ENCODE measurements at regions of chr1 and their contacts with region 1.

Region 1: DNA sequence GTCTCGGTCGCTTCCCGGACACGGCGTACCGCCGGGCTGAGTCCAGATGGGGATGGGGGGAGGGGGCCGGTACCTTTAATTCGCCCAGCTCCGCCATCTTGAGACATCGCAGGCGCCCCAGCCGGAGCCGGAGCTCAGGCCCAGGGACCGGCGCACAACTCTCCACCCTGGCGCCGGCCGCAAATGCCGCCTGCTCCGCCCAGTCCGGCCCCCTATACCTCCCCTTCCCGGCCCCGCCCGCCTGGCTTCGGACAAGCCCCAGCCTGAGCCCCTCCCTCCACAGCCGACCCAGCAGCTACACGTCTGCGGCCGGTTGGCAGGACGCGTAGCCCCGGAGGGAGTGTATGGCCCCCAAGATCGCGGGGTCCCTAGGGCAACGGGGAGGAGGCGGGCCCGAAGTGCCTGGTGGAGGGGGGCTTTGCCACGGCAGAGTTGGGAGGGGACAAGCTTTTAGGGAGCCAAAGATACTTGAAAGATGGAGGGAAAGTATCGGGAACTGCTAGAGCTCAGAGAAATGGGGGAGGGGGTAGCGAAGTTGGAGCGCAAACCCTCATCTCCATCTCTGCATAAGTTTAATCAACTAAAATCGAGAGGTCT is at the start of gene PIAS3:
- DNase-seq: peak; percentile 60 to 90 (median 78)
- ATAC-seq: peak; percentile 83
- H3K4me3 ChIP-seq: peak within 1 kb of the TSS; percentile 99 to 100
- H3K4me3 Mint-ChIP-seq: peak within 1 kb of the TSS; percentile 97
- H3K27ac ChIP-seq: peak within 1 kb of the TSS; percentile 64 to 65
- H3K27ac Mint-ChIP-seq: peak within 1 kb of the TSS; percentile 87
- H3K4me1 ChIP-seq: peaks cover 10% of the 10 kb centered on the region
- H3K4me1 Mint-ChIP-seq: peaks cover 17% of the 10 kb centered on the region
- H3K27me3 ChIP-seq: no peaks in the 10 kb centered on the region
- H3K27me3 Mint-ChIP-seq: no peaks in the 10 kb centered on the region
- CTCF ChIP-seq: no peak
- total RNA-seq, gene PIAS3: 16.3 to 16.6 TPM

Region 2: DNA sequence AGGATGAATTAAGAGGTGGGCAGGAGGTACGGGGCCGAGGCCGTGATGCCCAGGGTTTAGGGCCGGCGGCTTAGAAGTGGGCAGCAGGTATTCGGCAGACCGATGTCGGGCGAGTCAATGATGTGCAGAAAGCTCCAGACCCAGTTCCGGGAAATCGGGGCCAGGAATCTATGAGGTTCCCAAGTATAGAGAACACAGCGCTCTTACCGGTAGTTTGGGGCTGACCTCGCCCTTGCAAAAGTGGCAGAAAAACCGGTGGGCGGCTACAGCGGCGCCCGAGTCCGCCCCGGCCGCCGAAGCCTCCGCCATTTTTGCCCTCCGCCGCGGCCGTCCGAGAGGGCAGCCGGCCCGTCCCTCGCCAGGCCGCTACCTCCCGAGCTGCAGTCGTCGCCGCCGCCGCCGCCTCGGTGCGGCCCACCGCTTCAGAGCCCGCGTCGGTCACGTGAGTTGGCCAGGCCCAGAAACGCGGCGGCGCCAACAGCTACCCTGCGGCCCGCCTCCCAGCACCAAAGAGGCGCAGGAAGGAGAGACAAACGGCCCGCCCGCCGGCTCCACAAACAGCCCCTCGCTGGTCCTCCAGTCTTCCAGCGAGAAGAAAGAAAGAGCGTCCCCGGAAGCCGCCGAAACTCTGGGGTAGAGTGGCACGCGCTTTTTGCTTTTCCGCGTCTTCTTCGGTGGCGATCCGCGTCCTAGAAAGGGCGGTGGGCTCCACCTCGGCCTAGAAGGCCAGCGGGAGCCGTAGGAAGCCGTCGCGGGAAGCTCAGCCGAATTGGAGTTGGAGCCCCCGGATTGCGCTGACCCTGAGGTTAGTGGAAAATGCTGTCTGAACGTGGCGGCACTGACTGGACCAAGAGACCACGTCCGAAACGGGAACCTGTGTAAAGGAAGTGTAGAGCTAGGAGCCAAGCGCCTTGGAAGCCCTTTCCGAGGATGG is 35.2 kb before region 1 on chr1 and contains the starts of genes POLR3C and RNF115:
- CTCF ChIA-PET with region 1: interaction called, 3 read pairs
- POLR2A ChIA-PET with region 1: interaction called, 17 read pairs
- intact Hi-C with region 1: loop called in 1 of 2 experiments (anchors 1 kb)
- DNase-seq: peak; percentile 68 to 94 (median 88)
- ATAC-seq: peak; percentile 93
- H3K4me3 ChIP-seq: peak within 1 kb of the TSS; percentile 93 to 99
- H3K4me3 Mint-ChIP-seq: peak within 1 kb of the TSS; percentile 95
- H3K27ac ChIP-seq: peak within 1 kb of the TSS; percentile 77 to 89
- H3K27ac Mint-ChIP-seq: peak within 1 kb of the TSS; percentile 96
- H3K4me1 ChIP-seq: peaks cover 14% of the 10 kb centered on the region
- H3K4me1 Mint-ChIP-seq: peaks cover 35% of the 10 kb centered on the region
- H3K27me3 ChIP-seq: no peaks in the 10 kb centered on the region
- H3K27me3 Mint-ChIP-seq: no peaks in the 10 kb centered on the region
- CTCF ChIP-seq: no peak
- total RNA-seq, gene POLR3C: 22.1 to 25.8 TPM
- total RNA-seq, gene RNF115: 16.4 TPM

Region 3: GRCh38 chr1:145885738-145886287 is 26.8 kb after region 1 on chr1 and contains the start of gene ANKRD35:
- CTCF ChIA-PET with region 1: interaction called, 4 read pairs
- POLR2A ChIA-PET with region 1: interaction called, 21 read pairs
- intact Hi-C with region 1: loop called (anchors 1 kb)
- DNase-seq: peak; percentile 74 to 92 (median 88)
- ATAC-seq: peak; percentile 98
- H3K4me3 ChIP-seq: peak within 1 kb of the TSS; percentile 68 to 84
- H3K4me3 Mint-ChIP-seq: peak within 1 kb of the TSS; percentile 81
- H3K27ac ChIP-seq: no peak within 1 kb of the TSS
- H3K27ac Mint-ChIP-seq: no peak within 1 kb of the TSS
- H3K4me1 ChIP-seq: peaks cover 8% of the 10 kb centered on the region
- H3K4me1 Mint-ChIP-seq: peaks cover 17% of the 10 kb centered on the region
- H3K27me3 ChIP-seq: peaks cover 0 to 8% of the 10 kb centered on the region in 2 experiments
- H3K27me3 Mint-ChIP-seq: peaks cover 17% of the 10 kb centered on the region
- CTCF ChIP-seq: no peak
- total RNA-seq, gene ANKRD35: not detected

Region 4: DNA sequence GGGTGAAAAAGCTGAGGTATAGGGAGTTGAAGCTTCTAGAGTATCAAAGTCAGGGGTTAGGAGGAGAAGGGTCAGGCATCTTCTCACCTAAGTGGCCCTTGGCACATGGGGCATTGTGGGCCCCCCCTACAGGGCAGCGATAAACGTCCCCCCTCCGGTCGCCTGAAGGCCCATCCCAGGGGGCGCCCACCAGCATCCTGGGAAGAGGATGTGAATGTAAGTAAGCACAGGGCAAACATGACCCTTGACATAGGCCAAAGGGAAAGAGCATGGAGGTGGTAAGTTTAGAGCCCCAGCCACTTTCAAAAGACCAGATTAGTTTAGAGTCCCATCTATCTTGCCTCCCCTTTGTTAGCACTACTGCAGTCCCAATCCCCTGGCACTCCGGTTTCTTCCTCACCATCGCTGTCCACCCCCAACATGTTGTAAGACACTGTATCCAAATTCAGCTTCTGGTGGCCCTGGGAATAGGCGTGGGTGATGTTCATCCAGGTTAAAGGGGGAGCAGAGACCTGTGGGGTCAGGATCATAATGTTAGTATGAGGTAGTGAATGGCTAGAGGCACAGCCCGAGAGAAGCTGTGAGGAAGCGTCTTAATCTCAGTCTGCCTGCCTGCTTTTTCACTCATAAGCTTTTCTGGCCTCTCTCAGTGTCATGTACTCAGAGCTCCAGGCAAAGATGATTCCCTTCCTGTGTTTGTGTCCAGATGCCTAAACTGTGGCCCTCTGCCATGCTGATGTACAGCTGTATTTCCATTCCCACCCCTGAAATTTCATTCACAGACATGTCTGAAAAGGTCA is 48.2 kb after region 1 on chr1:
- CTCF ChIA-PET with region 1: interaction called, 29 read pairs
- POLR2A ChIA-PET with region 1: no interaction called
- intact Hi-C with region 1: loop called in 1 of 2 experiments (anchors 2 kb)
- DNase-seq: no peak
- ATAC-seq: no peak
- H3K4me3 ChIP-seq: no peak overlapping the region
- H3K4me3 Mint-ChIP-seq: no peak overlapping the region
- H3K27ac ChIP-seq: no peak overlapping the region
- H3K27ac Mint-ChIP-seq: peak overlapping the region; percentile 23
- H3K4me1 ChIP-seq: no peaks in the 10 kb centered on the region
- H3K4me1 Mint-ChIP-seq: peaks cover 5% of the 10 kb centered on the region
- H3K27me3 ChIP-seq: no peaks in the 10 kb centered on the region
- H3K27me3 Mint-ChIP-seq: no peaks in the 10 kb centered on the region
- CTCF ChIP-seq: no peak

Region 5: GRCh38 chr1:145927063-145927886 is 68.3 kb after region 1 on chr1 and contains the start of gene RBM8A:
- CTCF ChIA-PET with region 1: interaction called, 3 read pairs
- POLR2A ChIA-PET with region 1: interaction called, 41 read pairs
- intact Hi-C with region 1: loop called (anchors 2 kb)
- DNase-seq: peak; percentile 85 to 99 (median 94)
- ATAC-seq: peak; percentile 96
- H3K4me3 ChIP-seq: peak within 1 kb of the TSS; percentile 86 to 91
- H3K4me3 Mint-ChIP-seq: no peak within 1 kb of the TSS
- H3K27ac ChIP-seq: peak within 1 kb of the TSS; percentile 89 to 95
- H3K27ac Mint-ChIP-seq: peak within 1 kb of the TSS; percentile 91
- H3K4me1 ChIP-seq: peaks cover 22% of the 10 kb centered on the region
- H3K4me1 Mint-ChIP-seq: peaks cover 20% of the 10 kb centered on the region
- H3K27me3 ChIP-seq: no peaks in the 10 kb centered on the region
- H3K27me3 Mint-ChIP-seq: no peaks in the 10 kb centered on the region
- CTCF ChIP-seq: peak; percentile 60
- total RNA-seq, gene RBM8A: 180 to 187 TPM

Region 6: GRCh38 chr1:145978854-145979759 is 120.1 kb after region 1 on chr1:
- CTCF ChIA-PET with region 1: interaction called, 11 read pairs
- POLR2A ChIA-PET with region 1: interaction called, 4 read pairs
- intact Hi-C with region 1: no loop called
- DNase-seq: peak; percentile 45 to 96 (median 76)
- ATAC-seq: peak; percentile 72
- H3K4me3 ChIP-seq: peak overlapping the region; percentile 17 to 34
- H3K4me3 Mint-ChIP-seq: no peak overlapping the region
- H3K27ac ChIP-seq: peak overlapping the region; percentile 57 to 95
- H3K27ac Mint-ChIP-seq: no peak overlapping the region
- H3K4me1 ChIP-seq: peaks cover 70% of the 10 kb centered on the region
- H3K4me1 Mint-ChIP-seq: peaks cover 23% of the 10 kb centered on the region
- H3K27me3 ChIP-seq: no peaks in the 10 kb centered on the region
- H3K27me3 Mint-ChIP-seq: no peaks in the 10 kb centered on the region
- CTCF ChIP-seq: peak; percentile 27